ENCODE measurements at regions of chr3 and their contacts with region 1.

Region 1: DNA sequence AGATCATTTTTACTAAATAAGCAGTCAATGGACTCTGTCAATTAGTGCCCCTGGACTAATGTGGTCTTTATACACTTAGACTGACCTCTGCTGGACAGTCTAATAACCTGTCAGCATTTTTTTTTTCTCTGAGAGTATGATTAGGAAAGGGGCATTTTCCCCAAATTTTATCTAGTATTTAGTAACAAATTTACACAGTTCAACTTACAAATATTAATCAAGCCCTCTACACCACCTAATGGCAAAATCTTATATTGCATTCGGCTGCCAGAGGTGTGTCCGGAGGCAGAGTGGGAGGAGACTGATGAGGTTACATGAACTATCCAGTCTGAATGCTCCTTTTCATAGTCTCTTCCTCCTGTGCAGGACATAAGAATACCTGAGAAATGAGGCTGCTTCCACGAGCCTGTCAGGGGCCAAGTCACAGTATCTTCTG is 36.0 kb upstream of the COLQ start:
- DNase-seq: peak in 1 of 2 donors; percentile 43
- ATAC-seq: peak; percentile 92

Region 2: GRCh38 chr3:15440891-15441290 is 116.6 kb before region 1 on chr3:
- intact Hi-C with region 1: loop called in 1 of 2 experiments (anchors 10 kb)
- DNase-seq: no peak
- ATAC-seq: no peak

Region 3: GRCh38 chr3:15815696-15816095 is 258.2 kb after region 1 on chr3:
- intact Hi-C with region 1: no loop called
- DNase-seq: no peak
- ATAC-seq: no peak